Heart right ventricle (tissue), 16 donors: ENCODE measurements at regions of chr1 and their contacts with region 1.

Region 1: GRCh38 chr1:236997882-236998281 is 6.4 kb downstream of the MT1HL1 start:
- DNase-seq: peak; percentile 63 to 69
- ATAC-seq: peak; percentile 82 to 92 (median 90)
- H3K4me3 ChIP-seq: peak overlapping the region in 8 of 10 donors; percentile 9 to 42 (median 34)
- H3K27ac ChIP-seq: peak overlapping the region; percentile 80 to 97 (median 91)
- H3K4me1 ChIP-seq: peaks cover 0 to 22% (median 0%) of the 10 kb centered on the region in 9 donors
- H3K27me3 ChIP-seq: no peaks in the 10 kb centered on the region
- CTCF ChIP-seq: peak in 2 of 9 donors; percentile 29 to 33

Region 2: GRCh38 chr1:236893626-236894545 is 104.0 kb before region 1 on chr1:
- intact Hi-C with region 1: loop called in 1 of 10 experiments (anchors 5 kb)
- DNase-seq: no peak
- ATAC-seq: no peak
- H3K4me3 ChIP-seq: no peak overlapping the region
- H3K27ac ChIP-seq: peak overlapping the region in 7 of 10 donors; percentile 48 to 92 (median 88)
- H3K4me1 ChIP-seq: peaks cover 4 to 77% (median 37%) of the 10 kb centered on the region in 9 donors
- H3K27me3 ChIP-seq: no peaks in the 10 kb centered on the region
- CTCF ChIP-seq: no peak

Region 3: GRCh38 chr1:236952246-236953003 is 45.5 kb before region 1 on chr1:
- intact Hi-C with region 1: no loop called
- DNase-seq: no peak
- ATAC-seq: peak in 3 of 8 donors; percentile 38 to 57 (median 52)
- H3K4me3 ChIP-seq: peak overlapping the region in 2 of 10 donors; percentile 11 to 15
- H3K27ac ChIP-seq: peak overlapping the region in 1 of 10 donors; percentile 22
- H3K4me1 ChIP-seq: peaks cover 0 to 21% (median 6%) of the 10 kb centered on the region in 9 donors
- H3K27me3 ChIP-seq: no peaks in the 10 kb centered on the region
- CTCF ChIP-seq: no peak

Region 4: DNA sequence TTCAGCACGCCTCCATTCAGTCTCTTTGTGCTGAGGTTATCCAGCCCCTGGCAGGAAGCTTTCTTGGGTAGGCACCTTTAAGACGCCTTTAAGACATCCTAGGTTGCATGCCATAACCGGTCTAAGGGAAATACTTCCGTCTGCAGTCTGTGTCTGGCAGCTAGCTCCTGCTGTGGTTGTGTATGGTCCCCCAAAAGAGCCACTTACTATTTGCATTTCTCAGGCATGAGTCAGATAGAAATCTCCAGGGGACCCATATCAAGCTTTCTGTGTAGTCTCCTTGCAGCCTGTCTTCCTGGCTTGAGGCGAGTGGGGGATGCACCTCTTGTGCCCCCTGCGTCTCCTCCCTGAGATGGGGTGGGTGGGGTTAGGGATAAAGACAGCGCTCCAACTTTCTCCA is 34.1 kb after region 1 on chr1:
- intact Hi-C with region 1: loop called in 1 of 10 experiments (anchors 1 kb)
- DNase-seq: no peak
- ATAC-seq: peak in 4 of 8 donors; percentile 1 to 36 (median 28)
- H3K4me3 ChIP-seq: peak overlapping the region in 6 of 10 donors; percentile 6 to 26 (median 14)
- H3K27ac ChIP-seq: peak overlapping the region; percentile 44 to 87 (median 72)
- H3K4me1 ChIP-seq: peaks cover 0 to 47% (median 17%) of the 10 kb centered on the region in 9 donors
- H3K27me3 ChIP-seq: no peaks in the 10 kb centered on the region
- CTCF ChIP-seq: no peak